T-cell (primary cell): ENCODE measurements at regions of chr12 and their contacts with region 1.

Region 1: GRCh38 chr12:68158432-68158831 is 1.1 kb downstream of the IFNG start:
- DNase-seq: peak in 6 of 35 experiments; percentile 3 to 72 (median 14)
- ATAC-seq: peak in 2 of 4 experiments; percentile 43 to 47
- H3K4me3 ChIP-seq: peak overlapping the region in 1 of 2 donors; percentile 30
- H3K4me3 Mint-ChIP-seq: peak overlapping the region in 1 of 3 donors; percentile 58
- H3K27ac ChIP-seq: no peak overlapping the region
- H3K27ac Mint-ChIP-seq: no peak overlapping the region
- H3K4me1 ChIP-seq: peaks cover 0 to 4% of the 10 kb centered on the region in 2 experiments
- H3K4me1 Mint-ChIP-seq: peaks cover 10 to 40% (median 37%) of the 10 kb centered on the region in 3 donors
- H3K27me3 ChIP-seq: no peaks in the 10 kb centered on the region
- H3K27me3 Mint-ChIP-seq: no peaks in the 10 kb centered on the region

Region 2: GRCh38 chr12:67400742-67401141 is 757.7 kb before region 1 on chr12:
- CTCF ChIA-PET with region 1: no interaction called
- POLR2A ChIA-PET with region 1: no interaction called
- DNase-seq: no peak
- ATAC-seq: no peak
- H3K4me3 ChIP-seq: no peak overlapping the region
- H3K4me3 Mint-ChIP-seq: no peak overlapping the region
- H3K27ac ChIP-seq: no peak overlapping the region
- H3K27ac Mint-ChIP-seq: no peak overlapping the region
- H3K4me1 ChIP-seq: no peaks in the 10 kb centered on the region
- H3K4me1 Mint-ChIP-seq: no peaks in the 10 kb centered on the region
- H3K27me3 ChIP-seq: no peaks in the 10 kb centered on the region
- H3K27me3 Mint-ChIP-seq: peaks cover 0 to 2% of the 10 kb centered on the region in 2 donors

Region 3: GRCh38 chr12:67885375-67886169 is 272.9 kb before region 1 on chr12:
- CTCF ChIA-PET with region 1: no interaction called
- POLR2A ChIA-PET with region 1: no interaction called
- DNase-seq: no peak
- ATAC-seq: no peak
- H3K4me3 ChIP-seq: no peak overlapping the region
- H3K4me3 Mint-ChIP-seq: no peak overlapping the region
- H3K27ac ChIP-seq: no peak overlapping the region
- H3K27ac Mint-ChIP-seq: no peak overlapping the region
- H3K4me1 ChIP-seq: no peaks in the 10 kb centered on the region
- H3K4me1 Mint-ChIP-seq: peaks cover 1 to 11% (median 1%) of the 10 kb centered on the region in 3 donors
- H3K27me3 ChIP-seq: no peaks in the 10 kb centered on the region
- H3K27me3 Mint-ChIP-seq: peaks cover 3% of the 10 kb centered on the region in 2 donors

Region 4: GRCh38 chr12:68113644-68114043 is 44.8 kb before region 1 on chr12:
- CTCF ChIA-PET with region 1: interaction called in 1 of 2 experiments, 41 read pairs
- POLR2A ChIA-PET with region 1: interaction called in 1 of 2 experiments, 5 read pairs
- DNase-seq: peak in 28 of 35 experiments; percentile 12 to 68 (median 25)
- ATAC-seq: peak in 2 of 4 experiments; percentile 48 to 59
- H3K4me3 ChIP-seq: no peak overlapping the region
- H3K4me3 Mint-ChIP-seq: no peak overlapping the region
- H3K27ac ChIP-seq: no peak overlapping the region
- H3K27ac Mint-ChIP-seq: no peak overlapping the region
- H3K4me1 ChIP-seq: peaks cover 8 to 14% of the 10 kb centered on the region in 2 experiments
- H3K4me1 Mint-ChIP-seq: peaks cover 15 to 25% (median 21%) of the 10 kb centered on the region in 3 donors
- H3K27me3 ChIP-seq: no peaks in the 10 kb centered on the region
- H3K27me3 Mint-ChIP-seq: no peaks in the 10 kb centered on the region

Region 5: DNA sequence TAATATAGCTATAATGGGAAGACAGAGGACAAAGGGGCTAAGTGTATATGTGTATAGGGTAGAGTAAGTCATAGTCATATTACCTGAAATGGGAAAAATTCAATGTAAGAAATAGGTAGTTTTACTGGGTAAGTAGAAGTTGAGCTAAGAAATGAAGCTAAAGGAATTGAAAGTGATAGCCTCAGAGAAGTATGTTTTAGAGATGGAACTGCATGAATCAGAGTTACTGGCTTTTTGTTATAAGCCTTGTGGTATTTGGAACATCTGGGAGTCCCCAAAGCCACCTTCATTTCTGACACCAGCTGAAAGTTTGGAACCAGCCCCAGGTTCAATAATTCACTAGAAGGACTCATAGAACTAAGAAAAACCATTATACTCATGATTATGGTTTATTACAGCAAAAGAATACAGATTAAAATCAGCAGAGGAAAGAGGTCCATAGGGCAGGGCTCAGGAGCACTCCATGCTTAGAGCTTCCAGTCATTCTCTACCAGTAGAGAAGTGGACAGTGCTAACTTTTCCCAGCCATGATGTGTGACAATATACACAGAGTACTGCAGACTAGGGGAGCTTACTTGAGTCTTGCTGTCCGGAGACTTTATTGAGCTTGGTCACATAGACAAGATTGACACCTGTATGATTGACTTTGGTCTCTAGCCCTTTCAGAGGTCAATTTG is 10.9 kb after region 1 on chr12:
- CTCF ChIA-PET with region 1: interaction called in 1 of 2 experiments, 13 read pairs
- POLR2A ChIA-PET with region 1: no interaction called
- DNase-seq: no peak
- ATAC-seq: no peak
- H3K4me3 ChIP-seq: no peak overlapping the region
- H3K4me3 Mint-ChIP-seq: no peak overlapping the region
- H3K27ac ChIP-seq: no peak overlapping the region
- H3K27ac Mint-ChIP-seq: no peak overlapping the region
- H3K4me1 ChIP-seq: peaks cover 5 to 8% of the 10 kb centered on the region in 2 experiments
- H3K4me1 Mint-ChIP-seq: peaks cover 9 to 10% (median 9%) of the 10 kb centered on the region in 3 donors
- H3K27me3 ChIP-seq: no peaks in the 10 kb centered on the region
- H3K27me3 Mint-ChIP-seq: no peaks in the 10 kb centered on the region

Region 6: DNA sequence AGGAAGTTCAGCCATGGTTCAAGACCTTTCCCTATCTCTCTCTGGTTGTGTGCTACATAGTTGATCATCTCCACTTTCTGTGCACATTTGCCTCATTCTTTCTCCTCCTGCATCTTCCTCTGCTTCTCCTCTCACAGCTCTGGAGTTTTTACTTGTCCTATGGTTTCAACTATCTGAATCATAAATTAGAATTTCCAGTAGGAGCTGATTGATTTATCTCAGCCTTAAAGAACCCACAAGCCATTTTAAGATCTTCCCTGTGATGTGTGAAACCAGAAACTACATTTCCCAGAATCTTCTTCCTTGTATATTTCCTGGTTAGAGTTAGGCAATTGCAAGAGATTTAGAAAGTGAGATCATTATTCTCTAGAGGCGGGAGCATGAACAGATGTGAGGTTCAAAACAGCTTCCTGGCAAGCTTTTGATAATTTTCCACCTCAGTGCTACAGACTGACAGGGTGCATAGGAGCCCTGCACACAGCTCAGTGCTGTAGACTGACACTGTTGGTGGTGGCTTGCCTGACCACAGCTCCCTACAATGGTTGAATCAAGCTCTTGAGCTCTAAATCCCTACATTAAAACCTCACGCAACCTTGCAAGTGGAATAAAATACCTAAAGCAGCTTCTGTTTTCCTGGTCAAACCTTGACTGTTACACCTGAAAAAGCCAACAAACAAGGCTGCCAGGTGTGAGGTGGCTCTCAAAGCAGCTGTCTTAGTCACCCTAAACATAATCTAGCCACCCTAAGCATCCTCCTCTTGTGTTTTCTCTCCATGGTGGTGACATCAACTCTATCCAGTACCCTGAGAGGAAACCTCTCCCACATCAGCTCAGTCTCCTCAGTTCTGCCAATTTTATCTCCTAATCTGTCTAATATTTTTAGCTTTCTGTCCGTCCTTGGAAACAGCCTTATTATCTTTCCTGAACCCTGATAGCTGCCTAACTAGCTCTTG is 22.6 kb after region 1 on chr12:
- CTCF ChIA-PET with region 1: interaction called, 4 to 19 read pairs
- POLR2A ChIA-PET with region 1: interaction called in 1 of 2 experiments, 4 read pairs
- DNase-seq: peak in 30 of 35 experiments; percentile 5 to 73 (median 26)
- ATAC-seq: peak; percentile 83 to 91 (median 90)
- H3K4me3 ChIP-seq: no peak overlapping the region
- H3K4me3 Mint-ChIP-seq: peak overlapping the region; percentile 0 to 45 (median 31)
- H3K27ac ChIP-seq: peak overlapping the region; percentile 64
- H3K27ac Mint-ChIP-seq: peak overlapping the region; percentile 75 to 90
- H3K4me1 ChIP-seq: peaks cover 38 to 44% of the 10 kb centered on the region in 2 experiments
- H3K4me1 Mint-ChIP-seq: peaks cover 53 to 60% (median 57%) of the 10 kb centered on the region in 3 donors
- H3K27me3 ChIP-seq: no peaks in the 10 kb centered on the region
- H3K27me3 Mint-ChIP-seq: peaks cover 0 to 2% of the 10 kb centered on the region in 2 donors